Vagina (tissue), 2 donors: ENCODE measurements at regions of chrX and their contacts with region 1.

Region 1: DNA sequence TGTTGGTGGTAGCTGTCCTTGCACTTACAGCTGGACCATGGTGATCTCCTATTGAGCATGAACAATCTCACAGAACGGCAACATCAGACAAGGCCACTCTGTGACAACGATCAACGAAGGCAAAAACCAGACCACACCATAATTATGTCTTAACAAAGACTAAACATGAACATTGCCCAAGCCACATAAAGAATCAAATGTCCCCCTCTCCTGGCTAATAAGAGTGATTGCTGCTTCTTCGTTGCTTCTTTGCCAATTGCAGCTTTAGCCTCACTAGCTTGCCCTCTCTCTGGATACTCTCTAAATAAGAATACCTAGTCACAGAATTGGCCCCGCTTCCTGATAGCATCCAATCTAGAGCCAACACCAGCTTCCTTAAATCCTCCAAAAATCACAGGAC is 41.5 kb upstream of the PGRMC1 start:
- DNase-seq: peak in 1 of 2 donors; percentile 34
- H3K4me3 ChIP-seq: no peak overlapping the region
- H3K27ac ChIP-seq: no peak overlapping the region
- H3K4me1 ChIP-seq: no peaks in the 10 kb centered on the region
- H3K27me3 ChIP-seq: no peaks in the 10 kb centered on the region
- CTCF ChIP-seq: no peak
- POLR2A ChIP-seq: no peak

Region 2: GRCh38 chrX:118025226-118025625 is 1169.4 kb before region 1 on chrX:
- intact Hi-C with region 1: no loop called
- DNase-seq: no peak
- H3K4me3 ChIP-seq: no peak overlapping the region
- H3K27ac ChIP-seq: no peak overlapping the region
- H3K4me1 ChIP-seq: no peaks in the 10 kb centered on the region
- H3K27me3 ChIP-seq: no peaks in the 10 kb centered on the region
- CTCF ChIP-seq: no peak
- POLR2A ChIP-seq: no peak

Region 3: DNA sequence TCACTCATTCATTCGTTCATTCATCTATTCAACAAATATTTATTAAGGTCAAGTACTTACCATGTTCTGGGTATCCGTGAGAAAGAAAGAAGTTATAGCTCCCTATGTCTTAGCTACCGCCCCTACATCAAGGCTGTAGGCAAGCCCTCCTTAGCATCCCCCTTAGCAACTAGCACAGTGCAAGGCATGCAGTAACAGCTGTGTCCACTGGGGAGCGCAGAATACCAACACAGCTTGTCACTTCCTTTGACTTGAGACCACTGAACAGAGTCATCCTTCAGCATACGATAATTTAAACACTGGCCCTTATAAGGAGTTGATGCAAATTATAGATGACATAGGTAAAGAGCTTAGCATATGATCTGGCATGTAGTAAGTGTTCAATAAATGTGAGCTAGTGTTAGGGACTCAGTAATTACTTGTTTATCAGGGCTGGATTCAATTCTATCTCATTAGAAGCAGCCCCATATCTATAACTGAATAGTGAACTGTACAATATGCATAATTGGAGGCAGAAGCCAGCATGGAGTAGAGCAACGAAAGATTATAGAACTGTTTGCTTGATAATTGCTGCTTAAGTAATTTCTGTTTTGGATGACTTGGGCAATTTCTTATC is 75.7 kb before region 1 on chrX:
- intact Hi-C with region 1: loop called (anchors 10 kb)
- DNase-seq: no peak
- H3K4me3 ChIP-seq: no peak overlapping the region
- H3K27ac ChIP-seq: no peak overlapping the region
- H3K4me1 ChIP-seq: no peaks in the 10 kb centered on the region
- H3K27me3 ChIP-seq: no peaks in the 10 kb centered on the region
- CTCF ChIP-seq: peak in 2 of 3 experiments; percentile 20 to 46
- POLR2A ChIP-seq: no peak